ENCODE measurements at regions of chr1 and their contacts with region 1.

Region 1: GRCh38 chr1:246699095-246699735 is 25.0 kb upstream of the SCCPDH start:
- DNase-seq: peak; percentile 87 to 91 (median 88)
- ATAC-seq: peak; percentile 91 to 97 (median 96)
- H3K4me3 ChIP-seq: peak overlapping the region in 8 of 12 donors; percentile 22 to 52 (median 38)
- H3K27ac ChIP-seq: peak overlapping the region in 11 of 12 donors; percentile 26 to 80 (median 68)
- H3K4me1 ChIP-seq: peaks cover 0 to 18% (median 9%) of the 10 kb centered on the region in 12 donors
- H3K27me3 ChIP-seq: no peaks in the 10 kb centered on the region
- CTCF ChIP-seq: peak; percentile 76 to 97 (median 89)
- POLR2A ChIP-seq: no peak

Region 2: DNA sequence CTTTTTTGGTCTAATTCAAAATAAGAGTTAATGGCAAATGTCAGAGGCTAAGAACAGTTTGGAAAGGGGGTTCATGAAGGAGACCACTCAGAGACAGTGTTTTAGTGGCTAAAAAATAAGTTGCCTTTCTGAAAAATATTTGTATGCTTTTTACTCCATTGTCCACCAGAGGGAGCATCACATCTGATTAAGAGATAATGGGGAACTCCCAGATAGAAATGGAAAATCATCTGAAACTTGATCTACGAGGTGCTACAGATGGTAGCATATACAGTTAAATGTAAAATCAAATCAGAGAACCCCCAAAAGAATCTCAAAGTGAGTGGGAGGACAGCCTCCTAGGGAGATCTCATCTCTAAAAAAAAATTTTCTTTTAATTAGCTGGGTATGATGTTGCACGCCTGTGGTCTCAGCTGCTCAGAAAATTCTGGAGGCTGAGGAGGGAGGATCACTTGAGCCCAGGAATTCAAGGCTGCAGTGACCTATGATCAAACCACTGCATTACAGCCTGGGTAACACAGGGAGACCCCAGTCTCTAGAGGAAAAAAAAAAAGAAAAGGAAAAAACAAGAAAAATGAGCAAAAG is 201.8 kb before region 1 on chr1:
- intact Hi-C with region 1: loop called (anchors 1 to 5 kb)
- DNase-seq: no peak
- ATAC-seq: peak in 1 of 4 donors; percentile 31
- H3K4me3 ChIP-seq: no peak overlapping the region
- H3K27ac ChIP-seq: no peak overlapping the region
- H3K4me1 ChIP-seq: peaks cover 0 to 3% (median under 1%) of the 10 kb centered on the region in 12 donors
- H3K27me3 ChIP-seq: no peaks in the 10 kb centered on the region
- CTCF ChIP-seq: peak; percentile 61 to 83 (median 72)
- POLR2A ChIP-seq: no peak

Region 3: GRCh38 chr1:246506674-246507481 is 192.3 kb before region 1 on chr1 and contains the start of gene SMYD3:
- intact Hi-C with region 1: loop called in 4 of 10 experiments (anchors 5 kb)
- DNase-seq: peak; percentile 72 to 89 (median 83)
- ATAC-seq: peak; percentile 95 to 100 (median 98)
- H3K4me3 ChIP-seq: peak within 1 kb of the TSS; percentile 66 to 90 (median 77)
- H3K27ac ChIP-seq: peak within 1 kb of the TSS in 9 of 12 donors; percentile 27 to 73 (median 57)
- H3K4me1 ChIP-seq: peaks cover 0 to 16% (median 7%) of the 10 kb centered on the region in 12 donors
- H3K27me3 ChIP-seq: no peaks in the 10 kb centered on the region
- CTCF ChIP-seq: peak in 4 of 12 donors; percentile 19 to 44 (median 40)
- POLR2A ChIP-seq: peak in 1 of 2 donors; percentile 78
- total RNA-seq, gene SMYD3: 6.6 to 12.1 (median 9.5) TPM

Region 4: GRCh38 chr1:246647113-246647512 is 52.1 kb before region 1 on chr1:
- intact Hi-C with region 1: loop called in 9 of 10 experiments (anchors 1 to 10 kb)
- DNase-seq: peak; percentile 73 to 84 (median 74)
- ATAC-seq: peak; percentile 84 to 97 (median 96)
- H3K4me3 ChIP-seq: peak overlapping the region in 10 of 12 donors; percentile 9 to 58 (median 46)
- H3K27ac ChIP-seq: peak overlapping the region in 11 of 12 donors; percentile 35 to 77 (median 58)
- H3K4me1 ChIP-seq: peaks cover 0 to 24% (median 1%) of the 10 kb centered on the region in 12 donors
- H3K27me3 ChIP-seq: no peaks in the 10 kb centered on the region
- CTCF ChIP-seq: peak; percentile 38 to 79 (median 64)
- POLR2A ChIP-seq: no peak